ENCODE measurements at regions of chr10 and their contacts with region 1.

Region 1: GRCh38 chr10:50417886-50418830 is 166.8 kb upstream of the ASAH2 start:
- DNase-seq: peak; percentile 31
- ATAC-seq: peak; percentile 91
- H3K4me3 ChIP-seq: peak overlapping the region; percentile 69 to 88 (median 76)
- H3K27ac ChIP-seq: peak overlapping the region; percentile 46
- H3K4me1 ChIP-seq: peaks cover 52% of the 10 kb centered on the region
- H3K27me3 ChIP-seq: no peaks in the 10 kb centered on the region
- CTCF ChIP-seq: peak; percentile 30; the same call in 1 of the 2 replicates
- EP300 ChIP-seq: no peak
- POLR2A ChIP-seq: no peak
- RAD21 ChIP-seq: peak; percentile 42

Region 2: DNA sequence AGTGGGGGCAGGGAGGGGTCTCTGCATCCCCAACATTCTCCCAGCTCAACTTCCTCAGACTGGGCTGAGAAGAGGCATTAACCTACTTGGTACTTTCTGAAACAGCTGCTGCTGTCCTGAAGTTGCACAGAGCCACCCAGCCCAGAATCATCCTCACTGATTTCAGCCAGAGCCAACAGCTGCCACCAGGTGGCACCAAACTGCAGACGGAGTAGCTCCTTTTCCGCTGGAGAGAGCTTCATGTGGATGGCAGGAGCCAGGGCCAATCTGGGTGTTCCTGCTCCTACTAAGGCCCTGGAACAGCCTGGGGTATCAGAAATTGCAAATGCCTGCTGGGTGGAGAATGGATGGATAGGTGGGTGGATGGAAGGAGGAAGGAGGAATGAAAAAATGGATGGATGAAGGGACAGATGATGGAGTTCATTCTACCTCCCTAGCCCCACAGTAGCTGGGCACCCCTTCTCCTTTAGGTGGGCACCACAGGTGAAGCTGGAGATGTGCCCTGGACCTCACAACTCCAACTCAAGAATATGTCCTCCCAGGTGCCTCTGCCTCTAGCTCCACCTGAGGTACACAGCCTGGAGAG is 1010.5 kb before region 1 on chr10:
- CTCF ChIA-PET with region 1: no interaction called
- POLR2A ChIA-PET with region 1: no interaction called
- in situ Hi-C with region 1: no loop called
- intact Hi-C with region 1: no loop called
- DNase-seq: peak; percentile 52
- ATAC-seq: peak; percentile 94
- H3K4me3 ChIP-seq: no peak overlapping the region
- H3K27ac ChIP-seq: no peak overlapping the region
- H3K4me1 ChIP-seq: no peaks in the 10 kb centered on the region
- H3K27me3 ChIP-seq: peaks cover 3 to 22% of the 10 kb centered on the region in 2 experiments; a peak in 4 of 5 replicates
- CTCF ChIP-seq: peak; percentile 92
- EP300 ChIP-seq: no peak
- POLR2A ChIP-seq: no peak
- RAD21 ChIP-seq: peak; percentile 63; the same call in 1 of the 2 replicates

Region 3: DNA sequence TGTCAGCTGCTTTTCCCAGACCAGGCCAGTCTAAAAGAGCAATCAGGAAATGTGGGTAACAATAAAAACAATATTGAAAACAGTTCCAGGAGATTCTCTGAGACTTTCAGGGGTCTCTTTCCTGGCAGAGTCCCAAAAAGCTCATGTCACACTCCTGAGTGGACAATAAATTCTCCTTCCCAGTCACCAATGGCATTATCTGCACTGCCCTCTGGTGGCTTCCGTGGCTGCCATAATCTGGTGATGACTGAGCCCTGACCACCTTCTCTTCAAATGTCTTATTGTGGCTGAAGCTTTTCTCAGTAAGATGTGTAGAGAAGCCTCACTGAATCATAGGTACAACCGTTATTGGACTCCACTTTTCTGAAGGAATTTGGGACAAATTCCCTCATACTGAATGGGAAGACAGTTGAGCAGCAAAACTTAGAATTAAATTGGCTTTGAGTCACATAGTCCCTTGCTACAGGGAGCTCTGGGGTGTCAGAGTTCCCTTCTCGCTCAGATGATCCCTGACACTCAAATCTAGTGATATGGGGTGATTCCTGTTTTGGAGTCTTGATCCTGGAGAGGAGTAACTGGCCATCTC is 142.4 kb before region 1 on chr10:
- CTCF ChIA-PET with region 1: no interaction called
- POLR2A ChIA-PET with region 1: no interaction called
- in situ Hi-C with region 1: no loop called
- intact Hi-C with region 1: no loop called
- DNase-seq: peak; percentile 20
- ATAC-seq: peak; percentile 81
- H3K4me3 ChIP-seq: no peak overlapping the region
- H3K27ac ChIP-seq: no peak overlapping the region
- H3K4me1 ChIP-seq: peaks cover 15% of the 10 kb centered on the region
- H3K27me3 ChIP-seq: peaks cover 0 to under 1% of the 10 kb centered on the region in 2 experiments; a peak in 1 of 5 replicates
- CTCF ChIP-seq: peak; percentile 84
- EP300 ChIP-seq: no peak
- POLR2A ChIP-seq: no peak
- RAD21 ChIP-seq: peak; percentile 68

Region 4: DNA sequence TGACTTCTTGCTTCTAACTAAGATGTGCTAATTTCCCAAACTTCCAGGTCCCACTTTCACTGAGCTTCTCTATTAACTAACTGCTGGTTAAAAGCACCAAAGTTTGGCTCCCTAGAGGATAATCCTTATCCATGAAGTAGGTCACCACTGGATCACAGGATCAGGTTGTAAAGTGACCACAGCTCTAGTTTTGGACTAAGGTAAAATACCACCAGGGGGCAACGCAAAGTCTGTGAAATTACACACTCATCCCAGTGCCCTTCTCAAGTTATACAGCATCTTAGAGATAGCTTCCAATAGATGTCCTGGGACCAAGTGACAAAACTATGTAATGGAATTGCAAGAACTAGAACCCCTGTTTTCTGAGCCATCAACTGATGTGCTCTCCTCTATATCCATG is 50.4 kb before region 1 on chr10:
- CTCF ChIA-PET with region 1: interaction called, 20 read pairs
- POLR2A ChIA-PET with region 1: no interaction called
- in situ Hi-C with region 1: no loop called
- intact Hi-C with region 1: loop called (anchors 1 kb)
- DNase-seq: peak; percentile 35
- ATAC-seq: peak; percentile 88
- H3K4me3 ChIP-seq: no peak overlapping the region
- H3K27ac ChIP-seq: no peak overlapping the region
- H3K4me1 ChIP-seq: no peaks in the 10 kb centered on the region
- H3K27me3 ChIP-seq: no peaks in the 10 kb centered on the region
- CTCF ChIP-seq: peak; percentile 72
- EP300 ChIP-seq: no peak
- POLR2A ChIP-seq: no peak
- RAD21 ChIP-seq: peak; percentile 56; the same call in 1 of the 2 replicates

Region 5: GRCh38 chr10:50393784-50394467 is 24.2 kb before region 1 on chr10:
- CTCF ChIA-PET with region 1: no interaction called
- POLR2A ChIA-PET with region 1: interaction called, 5 read pairs
- in situ Hi-C with region 1: no loop called
- intact Hi-C with region 1: loop called (anchors 2 kb)
- DNase-seq: peak; percentile 87
- ATAC-seq: peak; percentile 93
- H3K4me3 ChIP-seq: peak overlapping the region in 1 of 3 experiments; percentile 34; a peak in 1 of 6 replicates
- H3K27ac ChIP-seq: peak overlapping the region; percentile 72
- H3K4me1 ChIP-seq: peaks cover 81% of the 10 kb centered on the region
- H3K27me3 ChIP-seq: no peaks in the 10 kb centered on the region
- CTCF ChIP-seq: no peak
- EP300 ChIP-seq: peak in 1 of 2 experiments; percentile 76; a peak in 2 of 4 replicates
- POLR2A ChIP-seq: no peak
- RAD21 ChIP-seq: no peak

Region 6: GRCh38 chr10:50431791-50432190 is 13.6 kb after region 1 on chr10:
- CTCF ChIA-PET with region 1: no interaction called
- POLR2A ChIA-PET with region 1: no interaction called
- in situ Hi-C with region 1: no loop called
- intact Hi-C with region 1: no loop called
- DNase-seq: no peak
- ATAC-seq: no peak
- H3K4me3 ChIP-seq: no peak overlapping the region
- H3K27ac ChIP-seq: no peak overlapping the region
- H3K4me1 ChIP-seq: no peaks in the 10 kb centered on the region
- H3K27me3 ChIP-seq: no peaks in the 10 kb centered on the region
- CTCF ChIP-seq: no peak
- EP300 ChIP-seq: no peak
- POLR2A ChIP-seq: no peak
- RAD21 ChIP-seq: no peak